ENCODE measurements at regions of chr1 and their contacts with region 1.

Region 1: GRCh38 chr1:232403017-232403714 is 226.8 kb downstream of the SIPA1L2 start:
- H3K4me3 Mint-ChIP-seq: no peak overlapping the region
- H3K27ac Mint-ChIP-seq: no peak overlapping the region
- H3K4me1 Mint-ChIP-seq: peaks cover 7% of the 10 kb centered on the region
- H3K27me3 Mint-ChIP-seq: no peaks in the 10 kb centered on the region

Region 2: DNA sequence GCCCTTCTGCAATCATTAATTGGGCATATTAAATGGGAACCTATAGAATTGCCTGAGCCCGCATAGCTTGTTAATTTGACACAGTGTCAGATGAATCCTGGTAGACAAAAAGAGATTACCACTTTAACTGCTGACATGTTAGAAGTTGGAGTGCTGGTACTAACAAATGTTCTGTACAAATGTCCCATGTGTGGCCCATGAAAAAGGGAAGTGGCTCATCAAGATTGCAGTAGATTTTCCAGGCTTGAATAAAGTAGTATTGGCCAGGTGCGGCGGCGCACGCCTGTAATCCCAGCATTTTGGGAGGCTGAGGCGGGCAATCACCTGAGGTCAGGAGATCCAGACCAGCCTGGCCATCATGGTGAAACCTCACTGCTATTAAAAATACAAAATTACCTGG is 1116.6 kb before region 1 on chr1:
- intact Hi-C with region 1: loop called (anchors 5 kb)
- H3K4me3 Mint-ChIP-seq: no peak overlapping the region
- H3K27ac Mint-ChIP-seq: no peak overlapping the region
- H3K4me1 Mint-ChIP-seq: no peaks in the 10 kb centered on the region
- H3K27me3 Mint-ChIP-seq: no peaks in the 10 kb centered on the region

Region 3: DNA sequence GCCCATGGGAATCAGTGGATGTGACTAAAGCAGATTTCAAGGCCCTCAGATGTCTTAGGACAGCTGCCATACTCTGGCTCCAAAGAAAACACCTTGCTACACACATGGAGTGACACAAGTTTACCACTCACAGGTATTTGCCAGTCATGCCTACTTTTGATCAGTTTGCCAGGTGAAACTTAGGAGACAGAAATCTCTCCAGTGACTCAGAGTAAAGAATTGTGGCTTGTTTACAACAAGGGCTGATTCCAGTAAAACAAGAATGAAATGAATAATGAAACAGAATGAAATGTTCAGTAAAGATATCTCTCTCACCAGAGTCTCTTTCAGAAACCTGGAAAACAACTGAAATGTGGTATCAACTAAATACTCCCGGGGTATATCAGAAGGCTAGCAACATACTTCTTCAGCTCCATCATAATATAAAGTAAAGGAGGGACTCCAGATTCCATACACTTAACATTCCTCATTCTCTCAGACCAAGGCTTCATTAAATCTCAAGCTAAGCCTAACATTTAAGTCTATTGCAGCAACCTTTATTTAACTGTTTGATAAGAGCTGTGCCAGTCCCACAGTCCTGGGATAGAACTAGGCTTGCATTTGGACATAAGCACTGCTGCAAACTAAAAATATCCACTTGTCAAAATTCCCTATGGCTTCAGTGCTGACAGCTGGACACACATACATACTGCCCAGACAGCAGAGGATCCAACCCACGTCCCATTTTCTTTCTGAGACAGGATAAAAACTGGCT is 83.5 kb after region 1 on chr1:
- intact Hi-C with region 1: no loop called
- H3K4me3 Mint-ChIP-seq: no peak overlapping the region
- H3K27ac Mint-ChIP-seq: no peak overlapping the region
- H3K4me1 Mint-ChIP-seq: peaks cover 18% of the 10 kb centered on the region
- H3K27me3 Mint-ChIP-seq: no peaks in the 10 kb centered on the region

Region 4: DNA sequence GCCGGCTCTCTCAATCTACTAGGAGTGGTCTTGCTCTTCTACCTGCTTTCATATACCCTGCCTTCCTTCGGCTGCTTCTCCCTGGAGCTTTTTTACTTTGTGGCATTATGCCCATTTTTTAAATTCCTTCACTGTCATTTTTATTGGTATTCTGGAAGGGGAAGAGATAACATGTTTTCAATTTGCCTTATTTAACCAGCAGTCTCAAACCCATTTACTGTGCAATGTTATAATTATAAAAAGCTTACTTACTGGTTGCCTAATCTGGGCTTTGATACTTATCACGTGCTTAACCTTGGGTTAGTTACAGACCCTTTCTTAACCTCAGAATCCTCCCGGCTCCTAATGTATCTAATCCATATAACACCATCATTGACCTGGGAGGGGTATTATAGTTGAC is 98.7 kb after region 1 on chr1:
- intact Hi-C with region 1: no loop called
- H3K4me3 Mint-ChIP-seq: no peak overlapping the region
- H3K27ac Mint-ChIP-seq: no peak overlapping the region
- H3K4me1 Mint-ChIP-seq: peaks cover 5% of the 10 kb centered on the region
- H3K27me3 Mint-ChIP-seq: no peaks in the 10 kb centered on the region

Measured in dendritic cell treated with granulocyte-macrophage colony-stimulating factor and Interleukin-4, amounts not matched to agents 40 ng/mL and 50 ng/mL, for 4 days (primary cell).